ENCODE measurements at regions of chr17 and their contacts with region 1.

Region 1: DNA sequence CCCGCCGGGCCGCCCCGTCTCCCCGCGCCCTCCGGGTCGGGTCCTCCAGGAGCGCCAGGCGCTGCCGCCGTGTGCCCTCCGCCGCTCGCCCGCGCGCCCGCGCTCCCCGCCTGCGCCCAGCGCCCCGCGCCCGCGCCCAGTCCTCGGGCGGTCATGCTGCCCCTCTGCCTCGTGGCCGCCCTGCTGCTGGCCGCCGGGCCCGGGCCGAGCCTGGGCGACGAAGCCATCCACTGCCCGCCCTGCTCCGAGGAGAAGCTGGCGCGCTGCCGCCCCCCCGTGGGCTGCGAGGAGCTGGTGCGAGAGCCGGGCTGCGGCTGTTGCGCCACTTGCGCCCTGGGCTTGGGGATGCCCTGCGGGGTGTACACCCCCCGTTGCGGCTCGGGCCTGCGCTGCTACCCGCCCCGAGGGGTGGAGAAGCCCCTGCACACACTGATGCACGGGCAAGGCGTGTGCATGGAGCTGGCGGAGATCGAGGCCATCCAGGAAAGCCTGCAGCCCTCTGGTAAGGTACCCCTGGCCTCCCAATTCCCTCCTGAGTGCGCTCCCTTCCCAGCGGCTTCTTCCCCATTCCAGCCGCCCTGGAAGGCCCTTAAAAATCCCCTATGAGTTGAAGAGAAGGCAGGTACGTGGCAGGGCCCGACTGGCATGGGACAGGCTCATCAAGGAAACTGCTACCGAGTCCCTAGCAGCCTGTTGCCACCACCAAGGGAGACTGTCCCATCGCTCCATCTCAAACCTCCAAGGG is 505 bp downstream of the IGFBP4 start:
- DNase-seq: peak; percentile 89
- ATAC-seq: peak; percentile 59

Region 2: GRCh38 chr17:38456031-38456815 is 1987.5 kb before region 1 on chr17:
- intact Hi-C with region 1: loop called (anchors 5 kb)
- DNase-seq: no peak
- ATAC-seq: no peak

Region 3: GRCh38 chr17:40479533-40480480 is 36.1 kb after region 1 on chr17:
- intact Hi-C with region 1: loop called (anchors 5 kb)
- DNase-seq: no peak
- ATAC-seq: no peak

Region 4: GRCh38 chr17:40531051-40531991 is 87.6 kb after region 1 on chr17:
- intact Hi-C with region 1: loop called (anchors 5 kb)
- DNase-seq: peak; percentile 61
- ATAC-seq: no peak

Region 5: GRCh38 chr17:40588552-40588951 is 144.8 kb after region 1 on chr17:
- intact Hi-C with region 1: no loop called
- DNase-seq: no peak
- ATAC-seq: no peak

Measured in sciatic nerve (tissue), 2 donors.